Activated CD4-positive, alpha-beta memory T cell treated with anti-CD3 and anti-CD28 coated beads for 36 hours (primary cell): ENCODE measurements at regions of chr18 and their contacts with region 1.

Region 1: GRCh38 chr18:70781860-70782453 is 493.1 kb downstream of the SOCS6 start:
- DNase-seq: peak; percentile 72
- H3K4me3 Mint-ChIP-seq: no peak overlapping the region
- H3K27ac Mint-ChIP-seq: no peak overlapping the region
- H3K4me1 Mint-ChIP-seq: peaks cover 3% of the 10 kb centered on the region
- H3K27me3 Mint-ChIP-seq: no peaks in the 10 kb centered on the region

Region 2: DNA sequence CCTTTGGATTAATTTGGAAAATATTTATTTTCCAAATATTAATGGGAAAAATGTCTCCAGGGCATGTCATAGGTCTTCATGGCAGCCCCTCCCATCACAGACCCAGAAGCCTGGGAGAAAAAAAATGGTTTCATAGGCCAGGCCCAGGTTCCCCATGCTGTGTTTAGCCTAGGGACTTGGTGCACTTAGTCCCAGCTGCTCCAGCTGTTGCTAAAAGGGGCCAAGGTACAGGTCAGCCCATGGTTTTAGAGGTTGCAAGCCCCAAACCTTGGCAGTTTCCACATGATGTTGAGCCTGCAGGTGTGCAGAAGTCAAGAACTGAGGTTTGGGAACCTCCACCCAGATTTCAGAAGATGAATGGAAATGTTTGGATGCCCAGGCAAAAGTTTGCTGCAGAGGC is 183.6 kb before region 1 on chr18:
- CTCF ChIA-PET with region 1: no interaction called
- POLR2A ChIA-PET with region 1: no interaction called
- intact Hi-C with region 1: loop called (anchors 5 kb)
- DNase-seq: no peak
- H3K4me3 Mint-ChIP-seq: no peak overlapping the region
- H3K27ac Mint-ChIP-seq: no peak overlapping the region
- H3K4me1 Mint-ChIP-seq: peaks cover 7% of the 10 kb centered on the region
- H3K27me3 Mint-ChIP-seq: no peaks in the 10 kb centered on the region

Region 3: GRCh38 chr18:70758780-70759179 is 23.2 kb before region 1 on chr18:
- CTCF ChIA-PET with region 1: no interaction called
- POLR2A ChIA-PET with region 1: no interaction called
- intact Hi-C with region 1: no loop called
- DNase-seq: no peak
- H3K4me3 Mint-ChIP-seq: no peak overlapping the region
- H3K27ac Mint-ChIP-seq: no peak overlapping the region
- H3K4me1 Mint-ChIP-seq: no peaks in the 10 kb centered on the region
- H3K27me3 Mint-ChIP-seq: no peaks in the 10 kb centered on the region

Region 4: DNA sequence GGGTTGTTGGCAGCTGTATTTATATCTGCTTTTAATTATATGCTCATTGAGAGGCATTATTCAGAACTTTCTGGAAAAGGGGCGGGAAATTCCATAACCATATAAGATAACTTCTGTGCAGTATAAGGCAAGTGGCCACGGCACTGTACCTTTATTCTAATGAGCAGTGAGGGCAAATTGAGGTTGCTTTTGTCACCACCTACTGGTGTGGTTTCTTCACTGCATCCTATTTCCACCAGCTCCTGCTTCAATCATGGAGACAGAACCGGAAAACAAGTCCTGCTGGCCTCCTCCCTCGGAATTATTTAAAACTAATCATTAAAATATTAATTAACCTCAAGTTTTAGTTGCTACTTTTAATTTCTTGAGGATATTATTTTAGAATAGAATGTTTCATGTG is 1002.8 kb after region 1 on chr18:
- CTCF ChIA-PET with region 1: no interaction called
- POLR2A ChIA-PET with region 1: no interaction called
- intact Hi-C with region 1: loop called (anchors 5 kb)
- DNase-seq: peak; percentile 14
- H3K4me3 Mint-ChIP-seq: no peak overlapping the region
- H3K27ac Mint-ChIP-seq: no peak overlapping the region
- H3K4me1 Mint-ChIP-seq: no peaks in the 10 kb centered on the region
- H3K27me3 Mint-ChIP-seq: no peaks in the 10 kb centered on the region